ENCODE measurements at regions of chr4 and their contacts with region 1.

Region 1: GRCh38 chr4:143335979-143336780 is 496 bp upstream of the GAB1 start:
- DNase-seq: peak; percentile 42
- H3K4me3 Mint-ChIP-seq: peak overlapping the region; percentile 72
- H3K27ac Mint-ChIP-seq: no peak overlapping the region
- H3K4me1 Mint-ChIP-seq: peaks cover 8% of the 10 kb centered on the region
- H3K27me3 Mint-ChIP-seq: peaks cover 39% of the 10 kb centered on the region

Region 2: DNA sequence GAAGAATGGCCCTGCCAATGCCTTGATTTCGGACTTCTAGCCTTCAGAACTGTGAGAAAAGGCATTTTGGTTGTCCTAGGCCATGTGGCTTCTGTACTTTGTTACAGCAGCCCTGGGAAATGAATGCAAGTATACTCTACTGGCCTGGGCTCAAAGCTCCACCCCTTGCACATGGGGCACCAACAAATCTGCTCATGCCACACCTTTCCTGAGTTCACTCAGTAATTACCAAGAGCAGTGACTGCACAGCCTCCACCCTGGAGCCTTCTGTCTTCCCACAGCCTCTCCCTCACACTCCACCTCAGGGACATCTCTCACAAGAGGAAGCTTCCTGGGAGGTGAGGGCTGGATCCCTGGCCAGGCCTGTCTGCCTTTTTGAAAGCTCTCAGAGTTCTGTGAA is 28.6 kb before region 1 on chr4:
- CTCF ChIA-PET with region 1: no interaction called
- POLR2A ChIA-PET with region 1: no interaction called
- intact Hi-C with region 1: no loop called
- DNase-seq: no peak
- H3K4me3 Mint-ChIP-seq: no peak overlapping the region
- H3K27ac Mint-ChIP-seq: no peak overlapping the region
- H3K4me1 Mint-ChIP-seq: no peaks in the 10 kb centered on the region
- H3K27me3 Mint-ChIP-seq: no peaks in the 10 kb centered on the region

Region 3: GRCh38 chr4:143347484-143348111 is 11.4 kb after region 1 on chr4:
- CTCF ChIA-PET with region 1: no interaction called
- POLR2A ChIA-PET with region 1: no interaction called
- intact Hi-C with region 1: no loop called
- DNase-seq: no peak
- H3K4me3 Mint-ChIP-seq: no peak overlapping the region
- H3K27ac Mint-ChIP-seq: no peak overlapping the region
- H3K4me1 Mint-ChIP-seq: no peaks in the 10 kb centered on the region
- H3K27me3 Mint-ChIP-seq: peaks cover 17% of the 10 kb centered on the region

Region 4: DNA sequence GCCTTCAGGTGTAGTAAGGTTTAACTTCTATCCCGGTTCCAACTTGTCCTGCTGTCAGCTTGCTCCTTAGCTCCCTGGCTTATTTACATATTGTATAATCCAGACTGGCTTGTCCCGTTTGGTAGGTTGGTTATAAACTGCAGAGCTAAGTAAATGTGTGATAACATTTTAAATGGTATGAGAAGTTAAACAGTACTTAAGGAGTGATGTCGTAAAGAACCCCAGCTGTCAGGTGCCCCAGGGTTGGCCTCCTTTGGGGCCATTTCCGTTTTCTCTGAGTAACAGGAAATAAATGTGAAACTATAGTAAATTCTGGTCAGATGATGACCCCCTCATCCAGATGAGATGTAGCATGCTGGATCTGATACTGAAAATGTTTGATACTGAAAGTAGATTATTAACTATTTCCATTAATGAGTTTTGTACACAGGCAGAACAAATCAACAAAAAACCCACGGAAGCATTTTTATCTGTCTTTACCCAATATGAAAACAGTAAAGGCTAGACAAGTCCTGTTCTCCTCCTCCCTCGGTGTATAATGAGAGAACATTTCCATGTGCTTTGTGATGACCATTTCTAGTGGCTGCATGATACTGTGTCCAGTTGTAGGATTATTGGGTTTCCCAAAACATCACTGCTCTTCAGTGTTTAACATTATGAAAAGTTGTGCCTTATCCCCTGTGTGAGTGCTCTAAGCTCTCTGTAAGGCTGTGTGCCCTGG is 22.9 kb after region 1 on chr4:
- CTCF ChIA-PET with region 1: no interaction called
- POLR2A ChIA-PET with region 1: no interaction called
- intact Hi-C with region 1: loop called (anchors 1 kb)
- DNase-seq: peak; percentile 68
- H3K4me3 Mint-ChIP-seq: no peak overlapping the region
- H3K27ac Mint-ChIP-seq: peak overlapping the region; percentile 77
- H3K4me1 Mint-ChIP-seq: peaks cover 23% of the 10 kb centered on the region
- H3K27me3 Mint-ChIP-seq: no peaks in the 10 kb centered on the region

Region 5: DNA sequence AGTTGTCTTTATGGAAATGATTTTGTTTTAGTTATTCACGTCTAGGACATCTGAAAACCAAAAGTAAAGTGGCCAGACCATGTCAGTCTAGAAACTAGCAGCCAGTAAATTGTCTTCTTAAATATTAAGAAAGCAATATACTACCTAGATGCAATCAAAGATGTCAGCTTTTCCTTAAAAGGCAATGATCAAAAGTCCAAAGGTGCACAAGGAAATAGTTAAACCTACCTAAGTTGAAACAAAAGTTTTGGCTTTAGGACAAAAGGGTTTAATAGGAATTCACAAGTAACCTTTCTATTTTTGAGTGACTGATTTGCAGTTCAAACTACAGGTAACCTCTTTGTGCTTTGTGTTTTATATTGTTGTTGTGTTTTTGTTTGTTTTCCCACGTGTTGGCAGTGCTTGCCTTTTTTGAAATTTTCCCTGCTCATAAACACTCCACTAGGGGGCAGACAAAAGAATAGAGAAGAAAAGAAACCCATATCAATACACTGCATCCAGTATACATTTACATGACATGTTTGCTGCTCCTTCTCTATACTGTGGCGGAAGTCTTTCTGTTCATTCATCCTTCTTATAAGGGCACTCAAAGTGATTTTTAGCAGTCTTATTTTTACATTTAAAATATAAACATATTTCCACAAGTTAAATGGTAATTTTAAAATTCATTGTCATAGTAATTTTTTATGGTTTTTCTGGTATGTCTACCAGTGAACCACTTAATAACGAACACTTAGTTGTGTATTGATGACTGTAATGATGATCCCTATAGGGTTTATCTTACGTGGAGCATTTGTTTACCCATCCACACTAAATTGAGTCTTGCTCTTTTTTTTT is 63.2 kb after region 1 on chr4:
- CTCF ChIA-PET with region 1: no interaction called
- POLR2A ChIA-PET with region 1: no interaction called
- intact Hi-C with region 1: loop called (anchors 5 kb)
- DNase-seq: no peak
- H3K4me3 Mint-ChIP-seq: no peak overlapping the region
- H3K27ac Mint-ChIP-seq: no peak overlapping the region
- H3K4me1 Mint-ChIP-seq: peaks cover 10% of the 10 kb centered on the region
- H3K27me3 Mint-ChIP-seq: peaks cover 2% of the 10 kb centered on the region

Region 6: DNA sequence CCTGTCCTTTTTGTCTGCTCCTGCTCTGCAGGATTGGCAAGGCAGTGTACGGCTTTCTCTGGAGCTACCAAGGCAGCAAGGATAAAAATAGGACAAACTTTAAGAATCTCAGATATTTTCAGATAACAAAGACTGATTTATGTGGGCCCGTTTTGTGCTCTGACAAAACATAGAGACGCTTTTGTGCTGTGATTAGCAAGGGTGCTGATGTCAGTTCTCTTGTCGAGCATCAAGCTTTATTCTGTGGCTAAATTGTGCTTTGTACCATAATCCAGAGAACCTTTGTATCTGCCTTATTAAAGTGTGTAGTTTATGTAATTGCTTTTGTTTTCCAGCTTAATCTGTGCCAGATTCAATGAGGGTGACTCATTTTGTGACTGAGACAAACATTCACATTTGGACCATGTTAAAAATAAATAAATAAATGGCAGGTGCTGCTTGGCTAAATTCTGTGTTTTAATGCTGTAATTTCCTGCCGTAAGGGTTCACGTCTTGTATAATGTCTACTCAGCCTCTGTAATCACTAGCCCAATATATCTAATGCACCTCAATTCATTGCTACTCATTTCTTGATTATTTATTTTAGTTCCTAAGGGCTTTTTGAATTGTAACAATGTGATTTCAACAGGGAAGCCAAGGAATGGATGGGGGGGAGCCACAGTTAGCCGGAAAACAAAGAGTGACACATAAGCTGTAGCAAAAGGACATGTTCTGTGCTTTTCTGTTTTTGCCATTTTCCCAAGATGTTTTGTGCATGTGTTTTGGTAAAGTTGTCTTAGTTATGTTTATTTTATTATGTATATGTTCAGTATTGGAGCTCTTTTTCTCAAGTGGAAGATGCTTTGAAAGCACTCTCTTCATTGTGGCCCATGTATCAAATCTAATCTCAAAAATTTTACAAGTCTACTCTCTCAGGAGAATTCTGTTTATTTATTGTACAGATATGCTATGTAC is 75.6 kb after region 1 on chr4:
- CTCF ChIA-PET with region 1: no interaction called
- POLR2A ChIA-PET with region 1: no interaction called
- intact Hi-C with region 1: no loop called
- DNase-seq: no peak
- H3K4me3 Mint-ChIP-seq: no peak overlapping the region
- H3K27ac Mint-ChIP-seq: no peak overlapping the region
- H3K4me1 Mint-ChIP-seq: no peaks in the 10 kb centered on the region
- H3K27me3 Mint-ChIP-seq: peaks cover 14% of the 10 kb centered on the region